ENCODE measurements at regions of chr19 and their contacts with region 1.

Region 1: GRCh38 chr19:5977785-5978605 is at the start of gene RANBP3:
- DNase-seq: peak; percentile 94 to 100 (median 97)

Region 2: GRCh38 chr19:5904352-5905113 is 73.5 kb before region 1 on chr19 and contains the start of gene VMAC:
- intact Hi-C with region 1: loop called (anchors 5 kb)
- DNase-seq: peak; percentile 98 to 100 (median 99)

Measured in posterior cingulate gyrus (tissue), 11 donors.